Naive thymus-derived CD4-positive, alpha-beta T cell (primary cell): ENCODE measurements at regions of chr7 and their contacts with region 1.

Region 1: GRCh38 chr7:45061806-45062425 is 26.9 kb downstream of the NACAD start:
- DNase-seq: no peak
- ATAC-seq: no peak
- H3K4me3 ChIP-seq: no peak overlapping the region
- H3K4me3 Mint-ChIP-seq: peak overlapping the region in 4 of 10 donors; percentile 15 to 55 (median 46)
- H3K27ac ChIP-seq: peak overlapping the region; percentile 3
- H3K27ac Mint-ChIP-seq: peak overlapping the region; percentile 48 to 91 (median 71)
- H3K4me1 ChIP-seq: peaks cover 5 to 26% of the 10 kb centered on the region in 2 donors
- H3K4me1 Mint-ChIP-seq: peaks cover 37 to 80% (median 68%) of the 10 kb centered on the region in 7 donors
- H3K27me3 ChIP-seq: no peaks in the 10 kb centered on the region
- H3K27me3 Mint-ChIP-seq: no peaks in the 10 kb centered on the region

Region 2: GRCh38 chr7:45033261-45033930 is 28.5 kb before region 1 on chr7:
- CTCF ChIA-PET with region 1: interaction called, 3 read pairs
- POLR2A ChIA-PET with region 1: interaction called, 11 read pairs
- intact Hi-C with region 1: loop called in 1 of 2 experiments (anchors 5 kb)
- DNase-seq: no peak
- ATAC-seq: peak; percentile 12
- H3K4me3 ChIP-seq: peak overlapping the region; percentile 15
- H3K4me3 Mint-ChIP-seq: peak overlapping the region; percentile 76 to 93 (median 81)
- H3K27ac ChIP-seq: peak overlapping the region; percentile 43
- H3K27ac Mint-ChIP-seq: peak overlapping the region; percentile 48 to 94 (median 84)
- H3K4me1 ChIP-seq: peaks cover 67 to 81% of the 10 kb centered on the region in 2 donors
- H3K4me1 Mint-ChIP-seq: peaks cover 61 to 80% (median 75%) of the 10 kb centered on the region in 7 donors
- H3K27me3 ChIP-seq: no peaks in the 10 kb centered on the region
- H3K27me3 Mint-ChIP-seq: no peaks in the 10 kb centered on the region

Region 3: GRCh38 chr7:45902820-45903219 is 840.9 kb after region 1 on chr7:
- CTCF ChIA-PET with region 1: no interaction called
- POLR2A ChIA-PET with region 1: no interaction called
- intact Hi-C with region 1: no loop called
- DNase-seq: no peak
- ATAC-seq: no peak
- H3K4me3 ChIP-seq: no peak overlapping the region
- H3K4me3 Mint-ChIP-seq: peak overlapping the region in 1 of 10 donors; percentile 13
- H3K27ac ChIP-seq: no peak overlapping the region
- H3K27ac Mint-ChIP-seq: no peak overlapping the region
- H3K4me1 ChIP-seq: no peaks in the 10 kb centered on the region
- H3K4me1 Mint-ChIP-seq: peaks cover 0 to 2% (median 0%) of the 10 kb centered on the region in 7 donors
- H3K27me3 ChIP-seq: no peaks in the 10 kb centered on the region
- H3K27me3 Mint-ChIP-seq: peaks cover 3 to 27% (median 18%) of the 10 kb centered on the region in 5 donors